ENCODE measurements at regions of chr6 and their contacts with region 1.

Region 1: GRCh38 chr6:127471379-127472255 is 12.4 kb upstream of the KIAA0408 start:
- DNase-seq: no peak
- H3K4me3 ChIP-seq: no peak overlapping the region
- H3K27ac ChIP-seq: no peak overlapping the region
- H3K4me1 ChIP-seq: no peaks in the 10 kb centered on the region
- H3K27me3 ChIP-seq: no peaks in the 10 kb centered on the region
- CTCF ChIP-seq: no peak
- POLR2A ChIP-seq: no peak

Region 2: DNA sequence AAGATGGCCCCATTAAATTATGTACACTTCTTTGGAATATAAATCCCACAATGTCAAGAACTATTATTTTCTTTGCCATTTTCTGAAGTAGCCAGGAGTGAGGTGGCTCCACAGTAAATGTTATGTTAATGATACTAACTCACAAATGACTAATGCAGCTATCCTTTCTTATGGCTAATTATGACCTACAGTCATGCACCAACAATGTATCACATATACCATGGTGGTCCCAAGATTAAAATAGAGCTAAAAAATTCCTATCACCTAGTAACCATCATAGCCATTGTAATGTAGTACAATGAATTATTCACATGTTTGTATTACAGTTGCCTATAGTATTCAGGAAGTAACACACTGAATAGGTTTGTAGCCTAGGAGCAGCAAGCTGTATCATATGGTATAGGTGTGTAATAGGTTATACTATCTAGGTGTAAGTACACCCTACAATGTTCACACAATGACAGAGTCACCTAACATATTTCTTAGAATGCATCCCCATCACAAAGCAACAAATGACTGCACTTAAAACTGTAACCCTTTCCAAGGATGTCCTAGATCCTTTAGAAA is 143.5 kb before region 1 on chr6:
- intact Hi-C with region 1: no loop called
- DNase-seq: no peak
- H3K4me3 ChIP-seq: no peak overlapping the region
- H3K27ac ChIP-seq: no peak overlapping the region
- H3K4me1 ChIP-seq: peaks cover 6 to 8% of the 10 kb centered on the region in 2 donors
- H3K27me3 ChIP-seq: no peaks in the 10 kb centered on the region
- CTCF ChIP-seq: no peak
- POLR2A ChIP-seq: no peak

Region 3: DNA sequence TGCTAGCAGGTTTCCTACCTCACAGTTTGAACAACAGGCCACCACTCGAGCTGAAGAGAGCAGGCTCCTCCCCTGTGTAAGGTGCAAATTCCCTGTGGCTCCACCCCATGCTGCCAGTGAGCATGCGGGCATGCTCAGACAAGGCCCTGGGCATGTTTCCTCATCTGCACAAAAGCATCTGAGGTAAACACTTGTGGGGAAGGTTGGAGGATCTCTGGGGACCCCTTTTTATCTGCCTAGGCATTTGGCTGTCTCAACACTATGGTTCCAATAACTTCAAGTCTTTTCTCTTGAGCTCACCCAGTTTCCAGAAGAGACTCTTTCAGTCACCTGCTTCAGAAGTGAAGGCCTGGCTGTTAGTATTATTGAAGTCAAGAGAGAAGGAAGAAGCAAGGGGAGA is 114.8 kb after region 1 on chr6:
- intact Hi-C with region 1: no loop called
- DNase-seq: no peak
- H3K4me3 ChIP-seq: no peak overlapping the region
- H3K27ac ChIP-seq: no peak overlapping the region
- H3K4me1 ChIP-seq: no peaks in the 10 kb centered on the region
- H3K27me3 ChIP-seq: no peaks in the 10 kb centered on the region
- CTCF ChIP-seq: no peak
- POLR2A ChIP-seq: no peak

Region 4: GRCh38 chr6:127637830-127638409 is 166.3 kb after region 1 on chr6:
- intact Hi-C with region 1: loop called (anchors 10 kb)
- DNase-seq: no peak
- H3K4me3 ChIP-seq: no peak overlapping the region
- H3K27ac ChIP-seq: no peak overlapping the region
- H3K4me1 ChIP-seq: no peaks in the 10 kb centered on the region
- H3K27me3 ChIP-seq: no peaks in the 10 kb centered on the region
- CTCF ChIP-seq: no peak
- POLR2A ChIP-seq: no peak